Activated T-helper 1 cell treated with anti-CD3 and anti-CD28 coated beads, Interleukin-12 subunit alpha, Interleukin-12 subunit beta, Interleukin-2, Interleukin-4 antibody, amounts not matched to agents 30 ng/mL and 10 ng/mL and 1 ng/mL, durations not matched to agents 14 hours and 24 hours and 36 hours (primary cell): ENCODE measurements at regions of chr10 and their contacts with region 1.

Region 1: GRCh38 chr10:80144067-80144695 is 11.7 kb downstream of the PLAC9 start:
- DNase-seq: no peak
- H3K4me3 Mint-ChIP-seq: peak overlapping the region; percentile 64
- H3K27ac Mint-ChIP-seq: peak overlapping the region; percentile 52
- H3K4me1 Mint-ChIP-seq: peaks cover 20% of the 10 kb centered on the region
- H3K27me3 Mint-ChIP-seq: no peaks in the 10 kb centered on the region

Region 2: DNA sequence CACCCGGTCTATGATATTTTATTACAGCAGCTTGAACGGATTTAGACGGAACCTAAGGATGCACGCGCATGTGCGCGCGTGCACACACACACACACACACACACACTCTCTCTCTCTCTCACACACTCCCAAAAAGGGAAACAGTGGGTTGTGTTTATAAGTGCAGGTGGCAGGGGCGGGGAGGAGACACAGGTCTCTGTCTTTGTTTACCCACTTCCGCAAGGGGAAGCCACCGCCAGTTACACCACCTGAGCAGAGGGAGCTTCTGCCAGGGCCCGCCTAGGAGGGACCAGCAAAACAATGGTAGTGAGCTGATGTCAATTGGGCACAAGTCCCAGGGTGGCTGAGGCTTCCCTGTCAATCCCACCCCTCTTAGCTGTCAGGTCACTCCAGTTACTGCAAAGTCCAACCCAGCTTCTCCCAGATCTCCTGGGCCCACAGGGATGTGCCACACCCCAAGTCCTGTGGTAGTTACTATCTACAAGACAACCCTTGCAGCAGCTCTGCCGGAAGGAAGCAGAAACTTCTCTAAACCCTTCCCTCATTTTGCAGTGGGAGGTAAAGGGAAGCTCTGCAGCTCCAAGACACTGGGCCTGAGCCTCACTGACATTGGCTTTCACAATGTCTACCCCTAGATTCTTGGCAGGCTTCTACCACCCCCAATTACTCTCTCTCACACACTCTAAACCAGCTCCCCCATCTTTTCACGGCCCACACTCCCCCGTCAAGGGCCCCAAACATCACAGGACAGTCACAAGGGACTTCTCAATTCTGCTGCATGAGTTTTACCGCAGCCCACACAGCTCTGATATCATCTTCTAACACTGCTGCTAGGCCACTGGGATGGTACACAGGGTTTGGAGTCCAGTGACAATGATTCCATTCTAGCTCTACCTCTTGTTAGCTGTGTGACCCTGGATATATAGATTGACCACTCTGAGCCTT is 43.6 kb after region 1 on chr10:
- intact Hi-C with region 1: loop called (anchors 2 kb)
- DNase-seq: peak; percentile 75
- H3K4me3 Mint-ChIP-seq: peak overlapping the region; percentile 68
- H3K27ac Mint-ChIP-seq: peak overlapping the region; percentile 94
- H3K4me1 Mint-ChIP-seq: peaks cover 78% of the 10 kb centered on the region
- H3K27me3 Mint-ChIP-seq: no peaks in the 10 kb centered on the region

Region 3: DNA sequence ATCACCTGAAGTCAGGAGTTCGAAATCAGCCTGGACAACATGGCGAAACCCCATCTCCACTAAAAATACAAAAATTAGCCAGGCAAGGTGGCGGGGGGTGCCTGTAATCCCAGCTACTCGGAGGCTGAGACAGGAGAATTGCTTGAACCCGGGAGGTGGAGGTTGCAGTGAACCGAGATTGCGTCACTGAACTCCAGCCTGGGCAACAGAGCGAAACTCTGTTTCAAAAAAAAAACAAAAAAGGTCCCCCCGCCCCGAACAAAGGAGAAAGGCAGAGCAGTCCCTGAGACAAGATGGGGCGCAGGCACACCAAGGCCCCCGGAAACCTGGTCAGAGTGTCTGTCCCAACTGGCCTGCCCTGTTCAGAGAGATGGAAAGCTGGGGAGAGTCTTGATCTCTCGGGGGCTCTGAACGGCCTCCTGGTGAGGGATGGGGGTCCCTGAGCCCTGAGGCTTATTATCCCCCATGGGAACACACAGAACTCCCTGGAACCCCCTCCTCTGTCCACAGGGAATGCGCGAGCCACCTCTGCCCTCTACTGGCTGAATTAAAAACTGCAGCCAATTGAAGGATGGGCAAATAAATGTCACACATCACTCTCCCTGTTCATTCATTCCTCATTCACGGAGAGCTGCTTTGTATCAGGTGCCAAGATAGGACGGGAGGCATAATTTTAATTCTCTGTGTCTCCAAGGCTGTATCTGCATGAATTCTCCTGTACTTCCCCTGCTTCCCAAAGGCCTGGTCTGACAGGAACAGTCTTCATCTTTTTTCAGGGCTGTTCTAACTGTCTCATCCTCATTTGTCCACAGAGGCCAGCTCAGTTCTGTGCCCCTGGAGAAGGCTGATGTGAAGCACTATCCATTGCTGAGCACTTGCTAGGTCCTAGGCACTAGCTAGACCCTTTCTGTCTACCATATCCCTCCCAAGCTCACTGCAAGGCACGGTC is 116.4 kb after region 1 on chr10:
- intact Hi-C with region 1: loop called (anchors 1 kb)
- DNase-seq: peak; percentile 19
- H3K4me3 Mint-ChIP-seq: no peak overlapping the region
- H3K27ac Mint-ChIP-seq: no peak overlapping the region
- H3K4me1 Mint-ChIP-seq: no peaks in the 10 kb centered on the region
- H3K27me3 Mint-ChIP-seq: peaks cover 6% of the 10 kb centered on the region

Region 4: GRCh38 chr10:80498833-80499741 is 354.9 kb after region 1 on chr10:
- intact Hi-C with region 1: no loop called
- DNase-seq: peak; percentile 40
- H3K4me3 Mint-ChIP-seq: peak overlapping the region; percentile 74
- H3K27ac Mint-ChIP-seq: peak overlapping the region; percentile 89
- H3K4me1 Mint-ChIP-seq: peaks cover 92% of the 10 kb centered on the region
- H3K27me3 Mint-ChIP-seq: no peaks in the 10 kb centered on the region